ENCODE measurements at regions of chr19 and their contacts with region 1.

Region 1: GRCh38 chr19:39412100-39412866 is at the start of gene PLEKHG2:
- DNase-seq: peak; percentile 93 to 99 (median 97)
- H3K4me3 ChIP-seq: peak within 1 kb of the TSS; percentile 93
- H3K4me3 Mint-ChIP-seq: peak within 1 kb of the TSS; percentile 89 to 96 (median 92)
- H3K27ac ChIP-seq: peak within 1 kb of the TSS; percentile 97
- H3K27ac Mint-ChIP-seq: peak within 1 kb of the TSS; percentile 96 to 100 (median 98)
- H3K4me1 ChIP-seq: peaks cover 28% of the 10 kb centered on the region
- H3K4me1 Mint-ChIP-seq: peaks cover 39 to 50% (median 46%) of the 10 kb centered on the region in 3 donors
- H3K27me3 ChIP-seq: no peaks in the 10 kb centered on the region
- H3K27me3 Mint-ChIP-seq: peaks cover 0 to 32% of the 10 kb centered on the region in 2 donors
- total RNA-seq, gene PLEKHG2: 35.2 to 36.4 TPM

Region 2: DNA sequence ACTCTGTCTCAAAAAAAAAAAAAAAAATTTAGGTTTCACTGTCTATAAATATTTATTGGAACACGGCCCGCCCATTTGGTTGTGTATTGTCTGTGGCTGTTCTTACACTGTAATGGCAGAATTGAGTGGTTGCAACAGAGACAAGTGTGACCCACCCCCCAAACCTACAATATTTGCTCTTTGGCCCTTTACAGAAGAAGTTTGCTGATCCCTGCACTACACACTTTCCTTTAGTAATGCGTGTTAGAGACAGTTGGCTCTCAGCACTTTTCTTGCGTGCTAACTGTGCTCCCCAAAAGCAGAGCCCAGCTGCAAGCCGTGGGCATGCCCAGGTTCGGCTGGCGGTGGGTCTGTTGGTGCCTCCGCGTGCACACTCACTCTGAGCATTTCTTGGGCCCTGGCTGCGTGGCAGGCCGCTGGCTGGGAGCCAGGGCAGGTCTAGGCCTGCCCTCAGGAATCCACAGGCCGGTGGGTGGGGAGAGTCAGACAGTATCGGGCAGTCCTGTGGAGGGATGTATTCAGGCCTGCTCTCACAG is 1432.7 kb before region 1 on chr19:
- CTCF ChIA-PET with region 1: no interaction called
- POLR2A ChIA-PET with region 1: no interaction called
- DNase-seq: no peak
- H3K4me3 ChIP-seq: no peak overlapping the region
- H3K4me3 Mint-ChIP-seq: no peak overlapping the region
- H3K27ac ChIP-seq: no peak overlapping the region
- H3K27ac Mint-ChIP-seq: no peak overlapping the region
- H3K4me1 ChIP-seq: no peaks in the 10 kb centered on the region
- H3K4me1 Mint-ChIP-seq: peaks cover 4 to 12% (median 6%) of the 10 kb centered on the region in 3 donors
- H3K27me3 ChIP-seq: no peaks in the 10 kb centered on the region
- H3K27me3 Mint-ChIP-seq: no peaks in the 10 kb centered on the region

Region 3: GRCh38 chr19:39372941-39373340 is 39.3 kb before region 1 on chr19:
- CTCF ChIA-PET with region 1: no interaction called
- POLR2A ChIA-PET with region 1: no interaction called
- DNase-seq: no peak
- H3K4me3 ChIP-seq: no peak overlapping the region
- H3K4me3 Mint-ChIP-seq: no peak overlapping the region
- H3K27ac ChIP-seq: no peak overlapping the region
- H3K27ac Mint-ChIP-seq: peak overlapping the region in 3 of 8 donors; percentile 29 to 75 (median 58)
- H3K4me1 ChIP-seq: no peaks in the 10 kb centered on the region
- H3K4me1 Mint-ChIP-seq: peaks cover 0 to 2% (median 0%) of the 10 kb centered on the region in 3 donors
- H3K27me3 ChIP-seq: no peaks in the 10 kb centered on the region
- H3K27me3 Mint-ChIP-seq: no peaks in the 10 kb centered on the region

Region 4: DNA sequence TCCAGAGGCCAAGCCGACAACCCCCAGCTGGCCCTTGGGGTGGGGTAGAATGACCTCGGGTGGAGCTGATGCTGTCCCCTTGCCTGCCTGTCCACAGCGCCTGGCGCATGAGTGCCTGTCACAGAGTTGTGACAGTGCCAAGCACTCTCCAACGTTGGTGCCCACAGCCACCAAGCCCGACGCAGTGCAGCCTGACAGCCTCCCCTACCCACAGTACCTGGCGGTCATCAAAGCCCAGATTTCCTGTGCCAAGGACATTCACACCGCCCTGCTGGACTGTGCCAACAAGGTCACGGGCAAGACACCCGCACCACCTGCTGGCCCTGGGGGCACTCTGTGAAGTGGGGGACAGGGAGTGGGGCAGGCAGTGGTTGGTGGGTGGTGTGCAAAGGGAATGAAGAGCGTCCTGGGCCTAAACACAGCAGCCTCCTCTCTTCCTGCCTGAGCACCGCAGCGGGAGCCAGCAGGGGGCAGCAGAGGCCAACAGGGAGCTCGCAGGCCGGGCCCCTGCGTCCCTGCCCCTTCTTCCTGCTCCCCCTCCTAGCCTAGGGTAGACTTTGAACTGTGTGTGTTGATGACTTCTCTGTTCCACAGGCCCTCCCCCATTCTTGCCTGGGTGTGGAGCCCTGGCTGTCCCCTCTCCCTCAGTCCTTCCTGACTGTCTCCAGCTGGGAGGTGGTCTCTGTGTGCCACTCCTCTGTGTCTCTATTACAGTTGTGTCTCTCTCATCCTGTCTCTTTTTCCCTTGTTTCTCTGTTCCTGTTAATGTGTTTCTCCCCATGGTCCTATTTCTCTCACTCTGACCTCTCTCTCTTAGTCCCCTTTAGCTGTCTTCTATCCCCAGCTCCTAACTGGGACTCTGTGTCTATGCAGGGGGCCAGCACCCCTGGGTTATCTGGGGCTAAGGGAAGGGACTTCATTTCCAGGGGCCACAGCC is 14.7 kb before region 1 on chr19:
- CTCF ChIA-PET with region 1: interaction called, 207 read pairs
- POLR2A ChIA-PET with region 1: interaction called, 96 read pairs
- DNase-seq: peak; percentile 87 to 94 (median 92)
- H3K4me3 ChIP-seq: peak overlapping the region; percentile 68
- H3K4me3 Mint-ChIP-seq: peak overlapping the region; percentile 70 to 89 (median 79)
- H3K27ac ChIP-seq: peak overlapping the region; percentile 45
- H3K27ac Mint-ChIP-seq: peak overlapping the region; percentile 91 to 100 (median 97)
- H3K4me1 ChIP-seq: peaks cover 54% of the 10 kb centered on the region
- H3K4me1 Mint-ChIP-seq: peaks cover 41 to 67% (median 54%) of the 10 kb centered on the region in 3 donors
- H3K27me3 ChIP-seq: no peaks in the 10 kb centered on the region
- H3K27me3 Mint-ChIP-seq: no peaks in the 10 kb centered on the region

Region 5: DNA sequence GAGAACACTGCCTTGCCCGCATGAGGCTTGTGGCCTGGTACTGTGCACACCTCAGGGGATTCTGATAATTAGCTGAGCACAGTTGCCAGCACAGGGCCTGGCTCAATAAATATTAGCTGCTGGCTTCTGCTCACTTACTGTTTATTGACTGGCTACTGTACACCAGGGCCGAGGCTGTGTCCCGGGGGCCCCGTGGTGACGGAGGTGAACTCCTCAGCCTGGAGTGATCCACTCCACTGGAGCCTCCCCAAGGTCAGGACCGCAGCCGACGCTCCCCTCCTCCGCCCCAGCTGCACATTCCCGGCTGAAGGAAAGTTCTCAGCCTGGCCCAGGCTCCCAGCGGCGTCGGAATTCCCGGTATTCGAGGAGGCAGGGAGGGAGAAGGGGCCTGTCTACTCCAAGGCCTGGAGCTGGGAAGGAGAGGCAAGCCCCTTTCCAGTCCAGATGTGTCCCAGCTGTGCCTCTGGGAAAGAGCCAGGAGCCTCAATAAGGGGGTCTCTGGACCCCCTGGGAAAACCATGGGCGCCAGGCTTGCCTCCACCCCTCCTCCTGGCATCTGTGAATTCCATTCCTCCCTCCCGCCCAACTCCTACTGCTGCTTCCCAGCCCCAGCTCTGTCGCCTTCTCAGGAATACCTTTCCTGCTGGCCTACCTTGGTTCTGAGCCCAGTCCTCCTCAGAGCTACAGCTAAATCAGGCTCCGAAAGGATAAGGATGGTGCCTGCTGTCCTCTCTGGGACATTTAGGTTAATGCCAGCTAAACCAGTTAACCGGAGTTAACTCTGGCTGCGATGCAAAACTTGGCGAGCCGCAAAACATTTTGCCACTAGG is 16.2 kb after region 1 on chr19:
- CTCF ChIA-PET with region 1: interaction called, 10 read pairs
- POLR2A ChIA-PET with region 1: interaction called, 3 read pairs
- DNase-seq: no peak
- H3K4me3 ChIP-seq: no peak overlapping the region
- H3K4me3 Mint-ChIP-seq: no peak overlapping the region
- H3K27ac ChIP-seq: no peak overlapping the region
- H3K27ac Mint-ChIP-seq: peak overlapping the region in 1 of 8 donors; percentile 94
- H3K4me1 ChIP-seq: peaks cover 1% of the 10 kb centered on the region
- H3K4me1 Mint-ChIP-seq: peaks cover 12 to 25% (median 12%) of the 10 kb centered on the region in 3 donors
- H3K27me3 ChIP-seq: no peaks in the 10 kb centered on the region
- H3K27me3 Mint-ChIP-seq: peaks cover 0 to 2% of the 10 kb centered on the region in 2 donors